ENCODE measurements at regions of chr11 and their contacts with region 1.

Region 1: GRCh38 chr11:12043959-12044819 is 35.8 kb upstream of the DKK3 start:
- DNase-seq: peak; percentile 95
- H3K4me3 ChIP-seq: no peak overlapping the region
- H3K27ac ChIP-seq: peak overlapping the region; percentile 84
- H3K4me1 ChIP-seq: peaks cover 41% of the 10 kb centered on the region
- H3K27me3 ChIP-seq: no peaks in the 10 kb centered on the region
- CTCF ChIP-seq: peak; percentile 79 to 92
- POLR2A ChIP-seq: no peak

Region 2: DNA sequence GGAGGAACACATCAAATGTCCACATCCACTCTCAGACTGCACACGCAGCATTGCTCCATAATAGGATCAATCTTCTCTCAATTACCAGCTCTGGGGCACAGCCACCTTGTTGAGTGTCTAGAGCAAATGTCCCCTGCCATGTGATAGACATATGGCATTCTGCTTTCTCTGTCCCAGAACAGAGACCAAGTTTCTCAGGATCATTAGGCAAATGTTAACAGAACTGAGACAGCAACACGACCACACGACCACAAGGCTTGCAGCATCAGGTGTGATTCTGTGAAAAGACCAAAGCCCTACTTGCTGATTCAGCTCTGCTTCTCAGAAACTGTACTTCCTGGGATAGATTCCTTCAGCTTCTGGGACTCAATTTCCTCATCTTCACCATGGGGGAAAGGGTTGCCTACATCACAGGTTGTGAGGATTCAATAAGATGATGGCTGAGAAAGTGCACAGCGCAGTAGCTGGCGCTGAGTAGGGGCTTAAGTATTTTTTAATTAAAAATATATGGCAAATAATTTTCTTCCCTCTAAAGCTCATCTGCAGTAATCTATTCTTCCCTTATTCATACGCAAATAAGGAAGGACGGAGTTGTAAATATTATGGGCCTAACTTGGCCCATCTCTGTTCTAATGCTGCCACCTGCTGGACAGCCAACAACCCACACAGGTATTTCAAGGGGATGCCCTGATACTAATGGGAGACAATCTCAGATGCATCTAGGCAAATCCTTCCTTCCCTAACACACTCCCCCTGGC is 256.7 kb before region 1 on chr11:
- CTCF ChIA-PET with region 1: interaction called, 10 read pairs
- POLR2A ChIA-PET with region 1: no interaction called
- dilution Hi-C with region 1: no loop called
- intact Hi-C with region 1: loop called (anchors 2 kb)
- DNase-seq: peak; percentile 66
- H3K4me3 ChIP-seq: no peak overlapping the region
- H3K27ac ChIP-seq: no peak overlapping the region
- H3K4me1 ChIP-seq: no peaks in the 10 kb centered on the region
- H3K27me3 ChIP-seq: peaks cover 0 to 5% of the 10 kb centered on the region in 2 experiments
- CTCF ChIP-seq: peak; percentile 69 to 73
- POLR2A ChIP-seq: no peak

Region 3: DNA sequence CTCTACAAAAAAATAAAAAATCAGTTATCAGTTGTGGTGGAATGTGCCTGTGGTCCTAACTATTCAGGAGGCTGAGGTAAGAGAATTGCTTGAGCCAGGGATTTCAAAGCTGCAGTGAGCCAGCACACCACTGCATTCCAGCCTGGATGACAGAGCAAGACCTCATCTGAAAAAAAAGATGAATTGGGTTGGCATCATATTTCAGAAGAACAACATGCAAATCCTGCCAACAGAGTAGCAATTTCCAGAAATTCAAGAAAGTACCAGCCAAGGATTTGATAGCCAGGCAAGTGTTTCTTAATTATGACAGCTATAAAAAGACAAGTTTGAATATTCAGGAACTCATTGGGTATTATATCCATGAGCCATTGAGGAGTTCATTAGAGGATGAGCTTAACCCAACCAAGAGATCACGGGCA is 127.2 kb before region 1 on chr11:
- CTCF ChIA-PET with region 1: interaction called, 10 read pairs
- POLR2A ChIA-PET with region 1: no interaction called
- dilution Hi-C with region 1: no loop called
- intact Hi-C with region 1: no loop called
- DNase-seq: no peak
- H3K4me3 ChIP-seq: no peak overlapping the region
- H3K27ac ChIP-seq: no peak overlapping the region
- H3K4me1 ChIP-seq: no peaks in the 10 kb centered on the region
- H3K27me3 ChIP-seq: no peaks in the 10 kb centered on the region
- CTCF ChIP-seq: no peak
- POLR2A ChIP-seq: no peak

Region 4: GRCh38 chr11:11977206-11977938 is 66.8 kb before region 1 on chr11:
- CTCF ChIA-PET with region 1: interaction called, 31 read pairs
- POLR2A ChIA-PET with region 1: no interaction called
- dilution Hi-C with region 1: no loop called
- intact Hi-C with region 1: loop called (anchors 1 kb)
- DNase-seq: peak; percentile 95
- H3K4me3 ChIP-seq: no peak overlapping the region
- H3K27ac ChIP-seq: peak overlapping the region; percentile 95
- H3K4me1 ChIP-seq: peaks cover 55% of the 10 kb centered on the region
- H3K27me3 ChIP-seq: no peaks in the 10 kb centered on the region
- CTCF ChIP-seq: no peak
- POLR2A ChIP-seq: peak; percentile 51

Region 5: GRCh38 chr11:12032968-12033367 is 11.2 kb before region 1 on chr11:
- CTCF ChIA-PET with region 1: no interaction called
- POLR2A ChIA-PET with region 1: no interaction called
- dilution Hi-C with region 1: no loop called
- intact Hi-C with region 1: no loop called
- DNase-seq: no peak
- H3K4me3 ChIP-seq: no peak overlapping the region
- H3K27ac ChIP-seq: no peak overlapping the region
- H3K4me1 ChIP-seq: peaks cover 3% of the 10 kb centered on the region
- H3K27me3 ChIP-seq: no peaks in the 10 kb centered on the region
- CTCF ChIP-seq: no peak
- POLR2A ChIP-seq: no peak

Region 6: GRCh38 chr11:12087075-12088004 is 43.2 kb after region 1 on chr11:
- CTCF ChIA-PET with region 1: interaction called, 41 read pairs
- POLR2A ChIA-PET with region 1: interaction called, 3 read pairs
- dilution Hi-C with region 1: no loop called
- intact Hi-C with region 1: loop called (anchors 1 kb)
- DNase-seq: peak; percentile 50
- H3K4me3 ChIP-seq: peak overlapping the region in 1 of 3 experiments; percentile 54
- H3K27ac ChIP-seq: peak overlapping the region; percentile 99
- H3K4me1 ChIP-seq: peaks cover 76% of the 10 kb centered on the region
- H3K27me3 ChIP-seq: no peaks in the 10 kb centered on the region
- CTCF ChIP-seq: peak; percentile 14 to 35
- POLR2A ChIP-seq: peak; percentile 50

Region 7: GRCh38 chr11:12174477-12175143 is 130.4 kb after region 1 on chr11:
- CTCF ChIA-PET with region 1: no interaction called
- POLR2A ChIA-PET with region 1: no interaction called
- dilution Hi-C with region 1: no loop called
- intact Hi-C with region 1: no loop called
- DNase-seq: peak; percentile 21
- H3K4me3 ChIP-seq: no peak overlapping the region
- H3K27ac ChIP-seq: peak overlapping the region; percentile 76
- H3K4me1 ChIP-seq: peaks cover 24% of the 10 kb centered on the region
- H3K27me3 ChIP-seq: no peaks in the 10 kb centered on the region
- CTCF ChIP-seq: no peak
- POLR2A ChIP-seq: no peak

Region 8: GRCh38 chr11:12235947-12236743 is 192.0 kb after region 1 on chr11:
- CTCF ChIA-PET with region 1: interaction called, 41 read pairs
- POLR2A ChIA-PET with region 1: no interaction called
- dilution Hi-C with region 1: no loop called
- intact Hi-C with region 1: loop called (anchors 1 kb)
- DNase-seq: peak; percentile 71
- H3K4me3 ChIP-seq: no peak overlapping the region
- H3K27ac ChIP-seq: peak overlapping the region; percentile 36
- H3K4me1 ChIP-seq: peaks cover 49% of the 10 kb centered on the region
- H3K27me3 ChIP-seq: no peaks in the 10 kb centered on the region
- CTCF ChIP-seq: peak; percentile 45 to 54
- POLR2A ChIP-seq: no peak

Region 9: DNA sequence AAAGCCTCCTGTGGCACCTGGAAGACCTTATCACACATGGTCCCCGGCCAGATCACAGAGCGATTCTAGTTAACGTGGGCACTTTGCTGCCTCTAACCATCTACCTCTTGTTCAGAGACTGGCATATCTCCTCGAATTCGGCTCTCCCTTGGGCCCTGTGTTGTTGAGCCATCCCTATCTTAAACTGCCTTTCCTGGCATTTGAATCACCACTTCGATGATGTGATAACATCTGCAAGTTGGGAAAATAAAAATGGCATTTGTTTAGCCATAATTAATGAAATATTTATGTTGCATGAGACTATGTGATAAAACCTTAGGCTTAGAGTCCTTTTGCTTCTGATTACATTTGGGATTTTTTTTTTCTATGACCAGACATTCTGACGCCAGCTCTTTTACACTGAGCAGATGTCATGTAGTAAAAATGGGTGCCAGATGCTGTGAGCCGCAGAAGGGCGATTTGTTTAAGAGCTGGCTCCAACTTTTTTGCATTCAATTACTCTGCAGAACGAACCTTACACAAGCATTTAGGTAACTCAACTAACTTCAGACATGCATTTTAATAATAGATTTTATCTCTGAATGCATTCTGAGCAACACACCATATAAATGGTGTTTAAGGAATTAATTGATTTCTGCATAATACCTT is 274.7 kb after region 1 on chr11:
- CTCF ChIA-PET with region 1: no interaction called
- POLR2A ChIA-PET with region 1: no interaction called
- dilution Hi-C with region 1: no loop called
- intact Hi-C with region 1: no loop called
- DNase-seq: no peak
- H3K4me3 ChIP-seq: no peak overlapping the region
- H3K27ac ChIP-seq: no peak overlapping the region
- H3K4me1 ChIP-seq: no peaks in the 10 kb centered on the region
- H3K27me3 ChIP-seq: no peaks in the 10 kb centered on the region
- CTCF ChIP-seq: no peak
- POLR2A ChIP-seq: no peak